HepG2 (cell line): ENCODE measurements at regions of chr10 and their contacts with region 1.

Region 1: GRCh38 chr10:5094265-5095205 is at the start of gene AKR1C3:
- DNase-seq: peak; percentile 78
- ATAC-seq: peak; percentile 84
- H3K4me3 ChIP-seq: peak within 1 kb of the TSS; percentile 66 to 77 (median 71)
- H3K27ac ChIP-seq: peak within 1 kb of the TSS; percentile 83
- H3K4me1 ChIP-seq: peaks cover 53% of the 10 kb centered on the region
- H3K27me3 ChIP-seq: no peaks in the 10 kb centered on the region; a peak in 1 of 5 replicates
- CTCF ChIP-seq: peak; percentile 60
- EP300 ChIP-seq: peak in 1 of 2 experiments; percentile 23; a peak in 1 of 4 replicates
- POLR2A ChIP-seq: peak; percentile 73 to 74
- RAD21 ChIP-seq: peak; percentile 63
- total RNA-seq, gene AKR1C3: 368 and 551 TPM in 2 replicates

Region 2: DNA sequence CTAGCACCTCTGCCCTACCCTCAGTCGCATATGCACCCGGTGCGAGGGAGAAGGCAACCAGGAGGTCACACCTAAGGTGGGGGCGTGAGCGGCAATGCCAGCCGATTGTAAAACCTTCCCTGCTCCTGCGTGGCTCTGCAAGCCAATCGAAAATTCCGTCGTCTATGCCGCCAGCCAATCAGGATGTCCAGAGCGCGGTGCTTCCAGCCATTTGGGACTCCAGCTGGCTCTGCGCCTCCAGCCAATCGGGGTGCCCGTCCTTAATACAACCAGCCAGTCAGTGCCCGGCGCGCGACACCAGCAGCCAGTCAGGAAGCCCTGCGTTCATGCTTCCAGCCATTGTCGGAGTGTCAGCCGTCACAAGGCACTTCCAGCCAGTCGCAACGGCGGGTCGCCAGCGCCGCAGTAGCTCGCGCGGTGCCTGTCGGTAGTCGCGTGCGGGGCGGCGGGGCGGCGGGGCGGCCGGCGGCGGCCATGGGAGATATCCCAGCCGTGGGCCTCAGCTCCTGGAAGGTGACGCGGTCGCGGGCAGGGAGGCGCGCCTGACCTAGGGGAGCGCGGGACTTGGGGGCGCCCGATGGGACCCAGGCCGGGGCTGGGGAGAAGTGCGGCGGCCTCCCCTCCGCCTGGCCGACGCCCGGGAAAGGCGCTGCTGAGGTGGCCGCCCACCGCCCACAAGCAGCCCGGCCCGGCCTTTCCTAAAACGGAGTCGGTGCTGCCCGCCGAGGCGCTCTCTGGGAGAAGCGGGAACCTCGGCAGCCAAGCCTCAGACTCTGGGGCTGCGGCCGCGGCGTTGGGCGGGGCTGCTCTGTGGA is 268.5 kb before region 1 on chr10 and contains the start of gene AKR1E2:
- CTCF ChIA-PET with region 1: no interaction called
- POLR2A ChIA-PET with region 1: no interaction called
- in situ Hi-C with region 1: no loop called
- intact Hi-C with region 1: no loop called
- DNase-seq: no peak
- ATAC-seq: no peak; the same call in 2 of the 3 replicates
- H3K4me3 ChIP-seq: no peak within 1 kb of the TSS
- H3K27ac ChIP-seq: no peak within 1 kb of the TSS
- H3K4me1 ChIP-seq: no peaks in the 10 kb centered on the region
- H3K27me3 ChIP-seq: peaks cover 1 to 24% of the 10 kb centered on the region in 2 experiments; a peak in 3 of 5 replicates
- CTCF ChIP-seq: no peak
- EP300 ChIP-seq: no peak
- POLR2A ChIP-seq: no peak
- RAD21 ChIP-seq: no peak
- total RNA-seq, gene AKR1E2: not detected in 2 replicates

Region 3: GRCh38 chr10:5002013-5002727 is 92.4 kb before region 1 on chr10:
- CTCF ChIA-PET with region 1: no interaction called
- POLR2A ChIA-PET with region 1: no interaction called
- in situ Hi-C with region 1: no loop called
- intact Hi-C with region 1: loop called (anchors 2 kb)
- DNase-seq: no peak
- ATAC-seq: no peak
- H3K4me3 ChIP-seq: peak overlapping the region; percentile 39 to 61 (median 55); a peak in 5 of 6 replicates
- H3K27ac ChIP-seq: peak overlapping the region; percentile 34
- H3K4me1 ChIP-seq: 0 out of 2 replicates have a peak, but pooled peaks cover 15% of the 10 kb centered on the region
- H3K27me3 ChIP-seq: no peaks in the 10 kb centered on the region
- CTCF ChIP-seq: no peak
- EP300 ChIP-seq: no peak
- POLR2A ChIP-seq: no peak
- RAD21 ChIP-seq: no peak

Region 4: GRCh38 chr10:5014936-5015335 is 79.6 kb before region 1 on chr10:
- CTCF ChIA-PET with region 1: interaction called, 4 read pairs
- POLR2A ChIA-PET with region 1: no interaction called
- in situ Hi-C with region 1: no loop called
- intact Hi-C with region 1: loop called (anchors 5 kb)
- DNase-seq: peak; percentile 29
- ATAC-seq: peak; percentile 75
- H3K4me3 ChIP-seq: no peak overlapping the region
- H3K27ac ChIP-seq: no peak overlapping the region
- H3K4me1 ChIP-seq: peaks cover 52% of the 10 kb centered on the region
- H3K27me3 ChIP-seq: no peaks in the 10 kb centered on the region
- CTCF ChIP-seq: peak; percentile 59
- EP300 ChIP-seq: no peak
- POLR2A ChIP-seq: no peak
- RAD21 ChIP-seq: peak; percentile 44; the same call in 1 of the 2 replicates

Region 5: GRCh38 chr10:5135581-5135980 is 41.0 kb after region 1 on chr10:
- CTCF ChIA-PET with region 1: no interaction called
- POLR2A ChIA-PET with region 1: no interaction called
- in situ Hi-C with region 1: no loop called
- intact Hi-C with region 1: no loop called
- DNase-seq: no peak
- ATAC-seq: no peak
- H3K4me3 ChIP-seq: no peak overlapping the region
- H3K27ac ChIP-seq: no peak overlapping the region
- H3K4me1 ChIP-seq: no peaks in the 10 kb centered on the region
- H3K27me3 ChIP-seq: no peaks in the 10 kb centered on the region
- CTCF ChIP-seq: no peak
- EP300 ChIP-seq: no peak
- POLR2A ChIP-seq: no peak
- RAD21 ChIP-seq: no peak

Region 6: DNA sequence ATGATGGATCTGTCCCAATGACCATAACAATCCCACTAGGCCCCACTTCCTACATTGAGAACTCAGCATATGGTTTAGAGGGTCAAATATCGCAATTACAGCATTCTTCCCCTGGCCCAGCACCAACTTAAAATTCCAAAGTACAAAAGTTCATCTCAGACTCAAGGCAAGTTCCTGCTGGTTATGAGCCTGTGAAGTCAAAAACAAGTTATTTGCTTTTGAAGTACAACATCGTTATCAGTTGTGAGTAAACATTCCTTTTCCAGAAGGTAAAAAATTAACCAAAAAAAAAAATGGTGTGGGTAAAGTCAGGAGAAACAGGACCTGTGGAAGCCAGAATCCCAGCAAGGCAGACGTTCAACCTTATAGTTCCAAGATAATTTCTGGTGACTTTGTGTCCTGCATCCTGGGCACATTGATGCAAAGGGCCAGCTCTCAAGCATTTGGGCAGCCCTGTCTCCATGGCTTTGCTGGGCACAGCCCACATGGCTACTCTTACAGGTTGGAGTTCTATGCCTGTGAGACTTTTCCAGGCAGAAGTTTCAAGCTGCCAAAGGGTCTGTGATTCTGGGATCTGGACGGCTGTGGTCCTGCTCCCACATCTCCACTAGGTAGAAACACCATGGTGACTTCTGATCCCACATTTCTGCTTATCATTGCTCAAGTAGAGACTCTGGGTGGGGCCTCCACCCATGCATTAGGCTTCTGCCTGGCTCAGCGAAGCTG is 52.9 kb after region 1 on chr10:
- CTCF ChIA-PET with region 1: no interaction called
- POLR2A ChIA-PET with region 1: interaction called, 8 read pairs
- in situ Hi-C with region 1: no loop called
- intact Hi-C with region 1: loop called (anchors 2 kb)
- DNase-seq: peak; percentile 99
- ATAC-seq: peak; percentile 91
- H3K4me3 ChIP-seq: peak overlapping the region; percentile 27 to 66 (median 36); a peak in 5 of 6 replicates
- H3K27ac ChIP-seq: peak overlapping the region; percentile 100
- H3K4me1 ChIP-seq: peaks cover 61% of the 10 kb centered on the region
- H3K27me3 ChIP-seq: no peaks in the 10 kb centered on the region
- CTCF ChIP-seq: 0 out of 2 replicates have a peak, but pooled peaks have one; percentile 6
- EP300 ChIP-seq: peak; percentile 90 to 100
- POLR2A ChIP-seq: peak; percentile 68 to 89; a peak in 3 of 4 replicates
- RAD21 ChIP-seq: peak; percentile 31

Region 7: DNA sequence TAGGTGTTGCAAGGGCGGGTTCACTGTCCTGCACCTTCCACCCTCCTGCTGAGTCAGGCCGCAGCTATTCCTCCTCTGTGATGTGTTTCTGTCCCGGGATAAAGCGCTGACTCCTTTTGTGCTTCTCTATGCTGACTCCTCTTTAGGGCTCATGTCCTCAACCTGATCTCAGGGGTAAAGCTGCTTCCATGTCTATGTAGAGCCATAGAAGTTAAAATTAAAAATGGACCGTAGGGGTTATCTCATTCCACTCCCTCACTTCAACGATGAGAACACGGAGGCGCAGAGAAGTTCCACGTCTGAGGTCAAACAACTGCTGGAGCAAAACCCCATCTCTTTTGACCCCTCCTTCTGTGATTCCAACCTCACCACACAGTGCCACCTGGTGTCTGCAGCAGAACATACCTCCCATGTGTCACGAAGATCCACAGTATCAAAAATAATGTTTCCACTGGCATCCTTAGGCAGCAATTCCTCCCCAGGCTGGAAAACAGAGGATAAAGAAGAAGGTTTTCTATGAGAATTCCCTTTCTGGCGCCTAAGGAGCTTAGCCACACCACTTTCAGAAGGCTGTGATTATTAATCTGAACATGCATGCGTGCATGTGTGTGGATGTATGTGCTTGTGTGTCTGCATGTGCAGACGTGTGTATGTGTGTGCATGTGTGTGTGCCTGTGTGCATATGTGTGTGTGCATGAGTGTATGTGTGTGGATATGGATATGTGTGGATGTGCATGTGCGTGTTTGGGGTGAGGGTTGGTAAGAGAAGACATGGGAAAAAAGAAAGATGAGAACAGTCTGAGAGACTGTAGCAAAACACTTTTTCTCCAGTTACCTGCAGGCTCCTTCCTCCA is 189.0 kb after region 1 on chr10:
- CTCF ChIA-PET with region 1: interaction called, 5 read pairs
- POLR2A ChIA-PET with region 1: interaction called, 3 read pairs
- in situ Hi-C with region 1: loop called (anchors 10 kb)
- intact Hi-C with region 1: loop called (anchors 5 kb)
- DNase-seq: peak; percentile 58
- ATAC-seq: peak; percentile 89
- H3K4me3 ChIP-seq: no peak overlapping the region
- H3K27ac ChIP-seq: no peak overlapping the region
- H3K4me1 ChIP-seq: peaks cover 17% of the 10 kb centered on the region
- H3K27me3 ChIP-seq: no peaks in the 10 kb centered on the region
- CTCF ChIP-seq: peak; percentile 82
- EP300 ChIP-seq: 0 out of 4 replicates have a peak, but pooled peaks of 1 of the 2 experiments have one; percentile 21
- POLR2A ChIP-seq: no peak
- RAD21 ChIP-seq: peak; percentile 86

Region 8: GRCh38 chr10:5376450-5376849 is 281.9 kb after region 1 on chr10:
- CTCF ChIA-PET with region 1: no interaction called
- POLR2A ChIA-PET with region 1: no interaction called
- in situ Hi-C with region 1: no loop called
- intact Hi-C with region 1: loop called (anchors 10 kb)
- DNase-seq: no peak
- ATAC-seq: no peak
- H3K4me3 ChIP-seq: no peak overlapping the region
- H3K27ac ChIP-seq: no peak overlapping the region
- H3K4me1 ChIP-seq: peaks cover 38% of the 10 kb centered on the region
- H3K27me3 ChIP-seq: no peaks in the 10 kb centered on the region
- CTCF ChIP-seq: no peak
- EP300 ChIP-seq: no peak
- POLR2A ChIP-seq: no peak
- RAD21 ChIP-seq: no peak